Prostate gland (tissue), 2 donors: ENCODE measurements at regions of chr20 and their contacts with region 1.

Region 1: GRCh38 chr20:49245921-49246740 is 26.9 kb downstream of the DDX27 start:
- DNase-seq: peak; percentile 49
- H3K4me3 ChIP-seq: no peak overlapping the region
- H3K27ac ChIP-seq: no peak overlapping the region
- H3K4me1 ChIP-seq: no peaks in the 10 kb centered on the region
- H3K27me3 ChIP-seq: no peaks in the 10 kb centered on the region
- CTCF ChIP-seq: peak; percentile 16 to 78 (median 74)
- POLR2A ChIP-seq: no peak

Region 2: GRCh38 chr20:49323622-49324238 is 77.6 kb after region 1 on chr20:
- intact Hi-C with region 1: loop called (anchors 5 kb)
- DNase-seq: peak; percentile 40
- H3K4me3 ChIP-seq: no peak overlapping the region
- H3K27ac ChIP-seq: no peak overlapping the region
- H3K4me1 ChIP-seq: no peaks in the 10 kb centered on the region
- H3K27me3 ChIP-seq: no peaks in the 10 kb centered on the region
- CTCF ChIP-seq: peak in 3 of 4 experiments; percentile 39 to 72 (median 66)
- POLR2A ChIP-seq: no peak

Region 3: DNA sequence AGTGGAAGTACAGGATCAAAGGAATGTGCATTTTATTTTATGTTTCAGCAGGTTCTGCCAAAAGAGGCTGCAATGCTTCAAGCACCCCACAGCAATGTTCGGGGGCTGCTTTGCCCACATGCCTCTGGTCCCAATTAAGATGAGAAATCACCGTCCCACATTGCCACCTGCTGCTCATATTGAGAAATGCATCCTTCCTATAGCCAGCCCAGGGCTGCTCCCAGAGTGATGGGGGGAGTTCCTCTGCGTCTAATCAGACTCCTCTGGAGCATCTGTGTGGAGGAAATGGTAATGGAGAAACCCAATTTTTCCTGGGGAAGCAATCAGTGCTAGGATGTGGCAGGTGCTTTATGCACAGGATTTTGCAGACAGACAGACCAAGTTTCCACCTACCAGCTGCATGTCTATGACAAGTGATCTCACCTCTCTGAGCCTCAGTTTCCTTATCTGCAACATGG is 288.2 kb after region 1 on chr20:
- intact Hi-C with region 1: loop called (anchors 10 kb)
- DNase-seq: peak; percentile 46
- H3K4me3 ChIP-seq: no peak overlapping the region
- H3K27ac ChIP-seq: no peak overlapping the region
- H3K4me1 ChIP-seq: no peaks in the 10 kb centered on the region
- H3K27me3 ChIP-seq: no peaks in the 10 kb centered on the region
- CTCF ChIP-seq: peak; percentile 37 to 86 (median 76)
- POLR2A ChIP-seq: no peak